HepG2 (cell line): ENCODE measurements at regions of chr15 and their contacts with region 1.

Region 1: GRCh38 chr15:55654561-55655031 is 66.5 kb upstream of the PYGO1 start:
- DNase-seq: no peak
- ATAC-seq: no peak
- H3K4me3 ChIP-seq: no peak overlapping the region
- H3K27ac ChIP-seq: no peak overlapping the region
- H3K4me1 ChIP-seq: no peaks in the 10 kb centered on the region
- H3K27me3 ChIP-seq: no peaks in the 10 kb centered on the region
- CTCF ChIP-seq: no peak
- EP300 ChIP-seq: no peak
- POLR2A ChIP-seq: no peak
- RAD21 ChIP-seq: no peak

Region 2: GRCh38 chr15:55799291-55800212 is 145.0 kb after region 1 on chr15:
- CTCF ChIA-PET with region 1: interaction called, 34 read pairs
- POLR2A ChIA-PET with region 1: no interaction called
- in situ Hi-C with region 1: loop called (anchors 5 kb)
- intact Hi-C with region 1: no loop called
- DNase-seq: peak; percentile 46
- ATAC-seq: peak; percentile 73
- H3K4me3 ChIP-seq: peak overlapping the region in 2 of 3 experiments; percentile 11 to 35; a peak in 2 of 6 replicates
- H3K27ac ChIP-seq: no peak overlapping the region
- H3K4me1 ChIP-seq: no peaks in the 10 kb centered on the region
- H3K27me3 ChIP-seq: 0 out of 5 replicates have a peak, but pooled peaks cover 0 to 3% of the 10 kb centered on the region in 2 experiments
- CTCF ChIP-seq: peak; percentile 86
- EP300 ChIP-seq: no peak
- POLR2A ChIP-seq: no peak
- RAD21 ChIP-seq: peak; percentile 54; the same call in 1 of the 2 replicates